CD8-positive, alpha-beta memory T cell (primary cell): ENCODE measurements at regions of chr12 and their contacts with region 1.

Region 1: DNA sequence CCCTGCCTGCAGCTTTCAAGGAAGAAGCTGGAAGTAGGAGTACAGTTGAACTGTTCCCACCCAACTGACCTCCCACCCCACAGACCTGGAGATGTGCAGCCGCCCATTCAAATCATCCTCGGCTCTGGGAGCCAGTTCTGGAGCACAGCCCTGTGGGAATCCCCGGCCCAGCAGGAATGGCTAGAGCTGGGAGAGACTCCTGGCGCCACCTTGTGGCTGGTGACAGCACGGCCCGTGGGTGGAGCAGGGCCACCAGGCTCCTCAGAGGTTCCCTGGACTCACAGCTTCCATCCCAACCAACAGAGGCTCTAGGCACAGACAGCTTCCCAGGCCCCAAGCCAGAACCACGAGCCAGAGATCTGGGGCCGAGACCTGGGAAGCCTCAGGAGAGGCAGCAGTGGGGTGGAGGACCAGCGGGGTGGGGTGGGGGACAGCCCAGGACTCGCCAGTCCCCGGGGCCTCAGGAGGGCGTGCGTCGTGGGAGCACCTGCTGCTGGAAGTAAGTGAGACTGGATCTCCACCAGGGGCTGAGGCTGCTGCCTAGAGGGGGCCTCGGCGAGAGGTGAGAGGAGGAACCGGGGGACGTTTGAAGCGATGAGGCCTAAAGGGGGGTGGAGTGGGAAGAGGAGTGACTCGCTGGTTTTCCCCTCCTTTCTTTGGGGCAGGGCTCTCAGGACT is 43.4 kb downstream of the RNF34 start:
- DNase-seq: peak; percentile 32 to 71 (median 45)
- H3K4me3 ChIP-seq: no peak overlapping the region
- H3K4me3 Mint-ChIP-seq: no peak overlapping the region
- H3K27ac ChIP-seq: no peak overlapping the region
- H3K27ac Mint-ChIP-seq: peak overlapping the region in 3 of 8 donors; percentile 38 to 74 (median 72)
- H3K4me1 ChIP-seq: no peaks in the 10 kb centered on the region
- H3K4me1 Mint-ChIP-seq: peaks cover 0 to 15% (median 4%) of the 10 kb centered on the region in 3 donors
- H3K27me3 ChIP-seq: no peaks in the 10 kb centered on the region
- H3K27me3 Mint-ChIP-seq: no peaks in the 10 kb centered on the region

Region 2: DNA sequence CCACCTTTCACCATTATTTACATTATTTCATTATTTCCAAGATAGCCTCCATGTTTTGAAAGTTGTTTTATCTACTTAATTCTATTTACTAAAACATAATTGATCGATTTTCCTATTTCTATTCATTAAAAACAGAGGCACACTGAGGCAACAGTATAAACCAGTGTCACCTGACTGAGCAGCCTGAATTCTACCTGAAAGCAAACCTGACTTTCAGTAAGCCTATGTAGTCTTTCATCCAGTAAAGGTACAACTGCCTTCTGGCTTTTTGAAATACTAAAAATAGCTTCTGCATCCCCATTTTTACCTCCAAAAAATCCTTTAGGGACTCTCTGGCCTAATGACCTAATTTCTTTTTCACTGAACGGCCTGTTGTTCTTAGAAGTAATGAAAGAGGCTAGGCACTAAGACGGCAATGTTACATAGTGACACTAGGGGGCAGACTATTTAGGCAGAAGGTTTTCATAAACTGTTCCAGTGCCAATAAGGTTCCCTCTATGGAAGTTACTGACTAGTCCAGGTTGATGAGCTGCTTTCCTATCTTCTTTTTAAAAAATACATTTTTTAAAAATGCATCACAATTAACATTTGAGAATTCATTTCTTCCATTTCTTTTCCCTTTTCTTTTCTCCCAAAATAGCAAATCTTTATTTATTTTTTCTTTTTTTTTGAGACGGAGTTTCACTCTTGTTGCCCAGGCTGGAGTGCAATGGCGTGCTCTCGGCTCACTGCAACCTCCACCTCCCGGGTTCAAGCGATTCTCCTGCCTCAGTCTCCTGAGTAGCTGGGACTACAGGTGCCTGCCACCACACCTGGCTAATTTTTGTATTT is 108.6 kb before region 1 on chr12:
- CTCF ChIA-PET with region 1: interaction called, 41 read pairs
- POLR2A ChIA-PET with region 1: no interaction called
- DNase-seq: peak in 2 of 5 donors; percentile 44 to 46
- H3K4me3 ChIP-seq: no peak overlapping the region
- H3K4me3 Mint-ChIP-seq: no peak overlapping the region
- H3K27ac ChIP-seq: no peak overlapping the region
- H3K27ac Mint-ChIP-seq: peak overlapping the region in 6 of 8 donors; percentile 4 to 75 (median 58)
- H3K4me1 ChIP-seq: peaks cover 4% of the 10 kb centered on the region
- H3K4me1 Mint-ChIP-seq: peaks cover 4 to 5% (median 5%) of the 10 kb centered on the region in 3 donors
- H3K27me3 ChIP-seq: no peaks in the 10 kb centered on the region
- H3K27me3 Mint-ChIP-seq: peaks cover 0 to 2% of the 10 kb centered on the region in 2 donors

Region 3: DNA sequence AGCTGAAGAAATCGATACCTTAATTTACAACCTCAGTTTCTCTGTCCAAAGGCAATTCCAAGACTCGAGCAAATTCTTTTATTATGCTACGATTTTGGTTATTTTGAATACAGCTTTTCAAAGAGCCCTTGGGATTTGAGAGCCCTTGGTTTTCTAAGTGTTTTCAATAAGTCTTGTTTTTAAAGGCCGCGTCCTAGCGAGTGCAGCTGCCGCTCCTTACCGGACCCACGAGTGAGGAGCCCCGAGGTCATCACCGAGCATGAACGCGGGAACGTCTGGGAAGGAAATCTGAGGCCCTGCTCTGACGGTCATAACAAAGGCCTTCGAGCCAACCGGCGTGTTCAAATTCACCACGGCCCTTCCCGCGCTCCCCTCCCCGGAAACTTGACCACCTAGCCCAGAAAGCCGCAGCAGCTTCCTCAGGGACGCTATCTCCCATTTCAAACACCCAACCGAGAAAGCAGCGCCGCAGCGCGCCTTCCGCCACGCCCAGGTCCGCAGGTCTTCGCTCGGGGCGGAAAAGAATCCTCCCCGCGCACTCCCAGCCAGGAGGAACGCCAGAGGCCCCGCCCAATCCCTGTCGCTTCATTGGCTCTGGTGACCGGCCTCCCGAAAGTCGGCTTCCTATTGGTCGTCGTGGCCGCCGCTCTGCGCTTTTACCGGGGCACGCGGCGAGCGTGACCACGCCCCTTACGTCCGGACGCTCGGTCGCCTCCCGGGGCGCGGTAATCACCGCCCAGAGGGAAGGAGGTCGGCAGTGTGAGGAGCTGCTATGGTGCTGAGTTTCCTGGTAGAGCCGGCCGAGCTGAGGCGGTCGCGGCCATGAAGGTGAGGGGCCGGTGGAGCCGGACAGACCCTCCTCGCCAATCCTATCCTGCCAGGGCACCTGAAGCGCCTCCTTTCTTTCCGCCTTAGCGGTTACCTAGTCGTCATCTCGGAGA is 43.7 kb before region 1 on chr12 and contains the start of gene RNF34:
- CTCF ChIA-PET with region 1: interaction called, 12 read pairs
- POLR2A ChIA-PET with region 1: no interaction called
- DNase-seq: peak; percentile 97 to 98 (median 97)
- H3K4me3 ChIP-seq: peak within 1 kb of the TSS; percentile 96
- H3K4me3 Mint-ChIP-seq: peak within 1 kb of the TSS; percentile 90 to 100 (median 93)
- H3K27ac ChIP-seq: peak within 1 kb of the TSS; percentile 97
- H3K27ac Mint-ChIP-seq: peak within 1 kb of the TSS; percentile 80 to 99 (median 96)
- H3K4me1 ChIP-seq: peaks cover 28% of the 10 kb centered on the region
- H3K4me1 Mint-ChIP-seq: peaks cover 37 to 53% (median 46%) of the 10 kb centered on the region in 3 donors
- H3K27me3 ChIP-seq: no peaks in the 10 kb centered on the region
- H3K27me3 Mint-ChIP-seq: no peaks in the 10 kb centered on the region
- total RNA-seq, gene RNF34: 85.5 to 90.8 TPM

Region 4: DNA sequence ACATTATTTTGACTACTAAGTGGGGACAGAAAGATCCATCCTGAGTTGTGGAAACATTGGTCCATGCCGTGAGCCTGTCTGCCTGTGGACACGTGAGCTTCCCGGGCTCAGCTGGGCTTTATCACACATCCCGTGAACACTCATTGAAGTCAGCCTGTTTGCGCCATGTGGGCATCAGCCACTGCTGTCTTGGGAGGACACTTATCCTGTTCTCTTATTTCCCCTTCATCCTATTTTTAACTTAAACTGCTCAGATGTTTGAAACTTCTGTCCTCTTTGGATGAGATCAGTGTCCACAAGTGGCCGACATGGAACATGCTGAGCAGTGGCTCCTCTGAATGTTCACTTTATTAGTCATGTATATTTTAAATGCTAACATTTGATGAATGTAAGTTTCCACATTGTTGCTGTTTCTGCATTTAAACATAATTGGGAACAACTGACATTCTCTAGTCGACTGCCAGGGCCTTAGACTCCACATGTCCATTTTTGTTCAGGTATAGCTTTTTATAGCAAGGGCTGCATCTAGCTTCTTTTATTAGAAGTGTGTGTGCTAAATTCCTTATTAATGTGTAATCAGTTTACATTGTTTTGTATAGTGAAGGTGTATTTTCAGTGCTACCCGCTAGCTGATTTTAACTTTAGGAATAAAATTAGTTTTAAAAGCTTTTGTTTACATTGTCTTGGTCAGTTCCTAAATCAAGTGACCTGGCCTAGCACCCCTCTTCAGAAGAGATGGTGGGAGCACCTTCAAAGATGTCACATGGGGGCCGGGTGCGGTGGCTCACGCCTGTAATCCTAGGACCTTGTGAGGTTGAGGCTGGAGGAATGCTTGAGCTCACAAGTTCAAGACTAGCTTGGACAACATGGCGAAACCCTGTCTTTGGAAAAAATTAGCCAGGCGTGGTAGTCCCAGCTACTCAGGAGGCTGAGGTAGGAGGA is 19.4 kb before region 1 on chr12:
- CTCF ChIA-PET with region 1: interaction called, 12 read pairs
- POLR2A ChIA-PET with region 1: no interaction called
- DNase-seq: no peak
- H3K4me3 ChIP-seq: no peak overlapping the region
- H3K4me3 Mint-ChIP-seq: no peak overlapping the region
- H3K27ac ChIP-seq: peak overlapping the region; percentile 2
- H3K27ac Mint-ChIP-seq: peak overlapping the region in 2 of 8 donors; percentile 12 to 66
- H3K4me1 ChIP-seq: no peaks in the 10 kb centered on the region
- H3K4me1 Mint-ChIP-seq: peaks cover 4 to 13% (median 8%) of the 10 kb centered on the region in 3 donors
- H3K27me3 ChIP-seq: no peaks in the 10 kb centered on the region
- H3K27me3 Mint-ChIP-seq: no peaks in the 10 kb centered on the region

Region 5: GRCh38 chr12:121432740-121433480 is 10.4 kb before region 1 on chr12:
- CTCF ChIA-PET with region 1: interaction called, 18 read pairs
- POLR2A ChIA-PET with region 1: interaction called, 5 read pairs
- DNase-seq: no peak
- H3K4me3 ChIP-seq: no peak overlapping the region
- H3K4me3 Mint-ChIP-seq: no peak overlapping the region
- H3K27ac ChIP-seq: no peak overlapping the region
- H3K27ac Mint-ChIP-seq: peak overlapping the region in 5 of 8 donors; percentile 32 to 77 (median 48)
- H3K4me1 ChIP-seq: no peaks in the 10 kb centered on the region
- H3K4me1 Mint-ChIP-seq: peaks cover 0 to 8% (median 6%) of the 10 kb centered on the region in 3 donors
- H3K27me3 ChIP-seq: no peaks in the 10 kb centered on the region
- H3K27me3 Mint-ChIP-seq: no peaks in the 10 kb centered on the region

Region 6: GRCh38 chr12:121839106-121839992 is 396.0 kb after region 1 on chr12:
- CTCF ChIA-PET with region 1: no interaction called
- POLR2A ChIA-PET with region 1: no interaction called
- DNase-seq: peak; percentile 99 to 100 (median 99)
- H3K4me3 ChIP-seq: peak overlapping the region; percentile 82
- H3K4me3 Mint-ChIP-seq: peak overlapping the region; percentile 85 to 100 (median 98)
- H3K27ac ChIP-seq: peak overlapping the region; percentile 68
- H3K27ac Mint-ChIP-seq: peak overlapping the region in 7 of 8 donors; percentile 81 to 95 (median 90)
- H3K4me1 ChIP-seq: peaks cover 8% of the 10 kb centered on the region
- H3K4me1 Mint-ChIP-seq: peaks cover 15 to 18% (median 15%) of the 10 kb centered on the region in 3 donors
- H3K27me3 ChIP-seq: no peaks in the 10 kb centered on the region
- H3K27me3 Mint-ChIP-seq: no peaks in the 10 kb centered on the region